Gastrocnemius medialis (tissue), 4 donors: ENCODE measurements at regions of chr14 and their contacts with region 1.

Region 1: GRCh38 chr14:91649930-91650329 is 82.0 kb downstream of the CATSPERB start:
- DNase-seq: no peak
- ATAC-seq: no peak
- H3K4me3 ChIP-seq: no peak overlapping the region
- H3K27ac ChIP-seq: no peak overlapping the region
- H3K4me1 ChIP-seq: no peaks in the 10 kb centered on the region
- H3K27me3 ChIP-seq: no peaks in the 10 kb centered on the region
- CTCF ChIP-seq: peak in 2 of 5 experiments; percentile 26 to 53
- POLR2A ChIP-seq: no peak

Region 2: DNA sequence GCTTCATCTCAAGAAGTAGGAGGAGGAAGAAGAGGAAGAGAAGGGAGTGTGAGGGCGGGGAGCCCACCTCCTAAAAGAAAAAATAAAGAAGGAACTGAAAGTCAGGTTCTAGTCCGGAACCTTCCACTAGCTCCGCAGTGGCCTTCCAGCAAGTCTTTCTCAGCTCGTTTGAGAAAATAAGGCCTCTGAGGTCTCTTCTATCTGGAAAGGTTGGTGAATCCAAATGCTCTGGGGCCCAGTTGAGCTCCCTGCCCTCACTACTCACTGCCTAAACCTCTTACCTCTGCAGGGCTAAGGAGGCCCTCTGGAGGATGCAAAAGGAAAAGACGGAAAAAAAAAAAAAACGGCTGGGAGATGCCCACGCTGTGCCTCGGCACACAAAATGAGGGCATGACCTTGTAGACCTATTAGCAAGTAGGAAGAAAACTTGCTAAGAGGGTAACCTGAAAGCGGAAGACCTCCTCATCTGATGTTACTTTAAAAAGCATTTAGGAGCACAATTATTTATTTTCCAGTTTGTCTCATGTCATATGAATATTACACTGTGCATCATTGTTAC is 261.6 kb after region 1 on chr14:
- in situ Hi-C with region 1: loop called in 2 of 4 experiments (anchors 10 kb)
- intact Hi-C with region 1: loop called (anchors 5 kb)
- DNase-seq: no peak
- ATAC-seq: no peak
- H3K4me3 ChIP-seq: no peak overlapping the region
- H3K27ac ChIP-seq: no peak overlapping the region
- H3K4me1 ChIP-seq: no peaks in the 10 kb centered on the region
- H3K27me3 ChIP-seq: no peaks in the 10 kb centered on the region
- CTCF ChIP-seq: peak in 2 of 5 experiments; percentile 25 to 29
- POLR2A ChIP-seq: no peak

Region 3: GRCh38 chr14:91996948-91997371 is 347.0 kb after region 1 on chr14:
- in situ Hi-C with region 1: loop called in 1 of 4 experiments (anchors 10 kb)
- intact Hi-C with region 1: no loop called
- DNase-seq: no peak
- ATAC-seq: peak in 1 of 2 donors; percentile 61
- H3K4me3 ChIP-seq: no peak overlapping the region
- H3K27ac ChIP-seq: peak overlapping the region in 1 of 4 donors; percentile 12
- H3K4me1 ChIP-seq: no peaks in the 10 kb centered on the region
- H3K27me3 ChIP-seq: no peaks in the 10 kb centered on the region
- CTCF ChIP-seq: peak in 3 of 5 experiments; percentile 14 to 54 (median 52)
- POLR2A ChIP-seq: no peak